Common myeloid progenitor, CD34-positive (primary cell): ENCODE measurements at regions of chr17 and their contacts with region 1.

Region 1: GRCh38 chr17:79045842-79046196 is 21.9 kb downstream of the C1QTNF1 start:
- DNase-seq: peak; percentile 59 to 73 (median 70)
- H3K4me3 ChIP-seq: no peak overlapping the region
- H3K27ac ChIP-seq: no peak overlapping the region
- H3K4me1 ChIP-seq: no peaks in the 10 kb centered on the region
- H3K27me3 ChIP-seq: peaks cover 0 to 2% (median 0%) of the 10 kb centered on the region in 5 experiments

Region 2: GRCh38 chr17:79019632-79020584 is 25.9 kb before region 1 on chr17:
- CTCF ChIA-PET with region 1: interaction called, 16 read pairs
- POLR2A ChIA-PET with region 1: interaction called, 8 read pairs
- DNase-seq: peak; percentile 69 to 78 (median 76)
- H3K4me3 ChIP-seq: no peak overlapping the region
- H3K27ac ChIP-seq: no peak overlapping the region
- H3K4me1 ChIP-seq: peaks cover 0 to 15% (median 12%) of the 10 kb centered on the region in 4 experiments
- H3K27me3 ChIP-seq: peaks cover 0 to 27% (median 23%) of the 10 kb centered on the region in 5 experiments

Region 3: DNA sequence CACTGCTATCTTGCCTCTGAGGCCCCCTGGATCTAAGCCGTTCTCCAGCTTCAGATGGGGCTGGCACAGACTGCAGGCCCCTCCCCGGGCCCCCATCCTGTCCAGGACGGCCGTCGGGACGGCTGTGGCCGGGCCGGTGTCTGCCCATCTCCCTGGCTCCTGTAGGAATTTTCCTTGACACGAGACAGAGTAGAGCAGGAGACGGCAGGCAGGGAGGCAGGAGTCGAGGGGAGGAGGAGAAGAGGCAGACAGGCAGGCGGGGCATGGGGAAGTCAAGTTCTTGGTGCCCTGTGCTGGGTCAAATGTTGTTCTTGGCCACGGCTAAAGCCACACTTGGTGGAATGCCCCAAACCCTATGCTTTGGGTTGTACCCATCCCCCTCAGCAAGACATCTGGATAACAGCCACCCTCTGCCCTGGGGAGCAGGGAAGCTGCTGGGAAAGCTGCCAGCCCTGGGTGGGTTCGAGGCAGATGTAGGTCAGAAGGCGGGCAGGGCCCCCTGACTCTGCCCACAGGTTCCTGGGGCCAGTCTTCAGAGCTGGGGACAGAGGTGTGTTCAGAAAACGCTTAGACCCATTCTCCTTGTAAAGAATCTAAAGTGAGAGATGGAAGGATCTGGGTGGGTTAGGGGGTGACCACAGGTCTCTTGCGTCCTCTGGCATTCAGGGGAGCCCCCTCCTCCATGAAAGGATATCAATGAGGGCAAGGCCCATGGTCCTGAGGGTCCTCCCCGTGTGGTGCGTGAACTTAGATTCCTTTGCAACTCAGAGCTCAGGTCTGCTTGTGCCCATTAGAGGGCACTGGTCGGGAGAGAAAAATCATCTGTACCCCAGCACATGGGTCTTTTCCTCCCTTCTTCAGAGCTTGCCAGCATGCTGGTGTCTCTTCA is 17.6 kb before region 1 on chr17:
- CTCF ChIA-PET with region 1: interaction called, 41 read pairs
- POLR2A ChIA-PET with region 1: no interaction called
- DNase-seq: peak in 2 of 3 donors; percentile 29 to 33
- H3K4me3 ChIP-seq: no peak overlapping the region
- H3K27ac ChIP-seq: no peak overlapping the region
- H3K4me1 ChIP-seq: peaks cover 0 to 19% (median 14%) of the 10 kb centered on the region in 4 experiments
- H3K27me3 ChIP-seq: peaks cover 0 to 58% (median 27%) of the 10 kb centered on the region in 5 experiments

Region 4: GRCh38 chr17:79057737-79058385 is 12.0 kb after region 1 on chr17:
- CTCF ChIA-PET with region 1: interaction called, 25 read pairs
- POLR2A ChIA-PET with region 1: no interaction called
- DNase-seq: peak in 2 of 3 donors; percentile 49 to 55
- H3K4me3 ChIP-seq: no peak overlapping the region
- H3K27ac ChIP-seq: no peak overlapping the region
- H3K4me1 ChIP-seq: peaks cover 0 to 20% (median 9%) of the 10 kb centered on the region in 4 experiments
- H3K27me3 ChIP-seq: peaks cover 0 to 2% (median 0%) of the 10 kb centered on the region in 5 experiments

Region 5: DNA sequence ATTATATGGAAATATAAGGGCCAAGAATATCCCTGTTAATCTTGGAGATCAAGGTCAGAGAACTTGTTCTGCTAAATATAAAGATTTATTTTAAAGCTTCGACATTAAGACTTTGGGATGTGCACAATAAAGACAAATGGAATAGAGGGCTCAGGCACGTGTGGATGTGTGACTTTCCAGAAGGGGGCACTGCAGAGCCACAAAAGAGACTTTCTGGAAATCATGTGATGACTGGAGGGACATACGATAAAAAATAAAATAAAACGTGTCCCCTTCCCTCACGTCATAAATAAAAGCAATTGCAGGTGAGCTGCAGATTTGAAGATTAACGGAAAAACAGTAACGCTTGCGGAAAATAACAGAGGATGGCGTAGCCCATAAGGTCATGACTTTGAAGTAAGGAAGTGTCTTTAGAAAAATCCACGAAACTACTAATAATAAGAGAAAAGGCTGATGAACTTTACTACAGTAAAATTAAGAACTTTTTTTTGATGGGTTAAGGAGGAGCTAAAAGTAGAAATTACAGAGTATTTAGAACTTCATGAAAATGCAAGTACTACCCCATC is 19.4 kb after region 1 on chr17:
- CTCF ChIA-PET with region 1: interaction called, 25 read pairs
- POLR2A ChIA-PET with region 1: no interaction called
- DNase-seq: peak; percentile 57 to 78 (median 71)
- H3K4me3 ChIP-seq: no peak overlapping the region
- H3K27ac ChIP-seq: no peak overlapping the region
- H3K4me1 ChIP-seq: peaks cover 0 to 1% (median 0%) of the 10 kb centered on the region in 4 experiments
- H3K27me3 ChIP-seq: no peaks in the 10 kb centered on the region

Region 6: DNA sequence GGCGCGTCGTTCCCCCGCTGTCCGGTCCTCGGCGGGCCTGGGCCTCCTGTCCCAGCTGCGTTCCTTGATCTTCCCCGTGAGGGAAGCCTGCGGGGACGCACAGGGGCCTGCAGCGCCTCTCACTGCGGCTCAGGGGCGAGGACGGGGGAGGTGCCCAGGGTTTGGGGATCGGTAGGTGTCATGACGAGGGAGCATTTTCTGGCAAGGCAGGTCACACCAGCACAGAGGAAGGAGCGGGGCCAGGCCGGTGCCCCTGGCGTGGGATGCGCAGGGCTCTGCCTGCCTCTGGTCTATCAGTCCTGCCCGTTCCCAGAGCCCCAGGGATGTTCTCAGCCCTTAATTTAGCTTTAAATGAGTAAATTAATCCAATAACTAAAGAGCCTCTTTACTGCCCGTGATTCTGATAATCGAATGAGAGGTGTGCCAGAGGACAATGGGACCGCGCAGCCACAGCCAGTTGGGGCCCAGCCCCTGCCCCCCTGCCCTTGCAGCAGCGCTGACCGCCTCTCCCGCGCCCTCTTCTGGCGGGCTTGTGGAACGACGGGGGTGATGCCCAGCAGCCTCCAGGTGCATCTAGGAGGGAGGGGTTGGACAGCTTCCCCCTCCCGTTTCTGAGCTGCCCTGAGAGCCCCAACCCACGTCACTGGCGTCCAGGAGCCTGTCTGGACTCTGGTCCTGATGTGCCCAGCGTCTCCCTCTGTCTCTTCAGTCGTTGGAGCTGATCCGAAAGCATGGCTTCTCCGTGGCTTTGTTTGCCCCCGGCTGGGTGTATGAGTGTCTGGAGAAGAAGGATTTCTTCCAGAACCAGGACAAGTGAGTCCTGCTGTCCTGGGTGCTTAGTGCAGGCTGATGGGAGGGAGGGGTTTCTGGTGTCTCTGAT is 36.7 kb after region 1 on chr17:
- CTCF ChIA-PET with region 1: interaction called, 39 read pairs
- POLR2A ChIA-PET with region 1: no interaction called
- DNase-seq: peak; percentile 26 to 45 (median 45)
- H3K4me3 ChIP-seq: no peak overlapping the region
- H3K27ac ChIP-seq: no peak overlapping the region
- H3K4me1 ChIP-seq: no peaks in the 10 kb centered on the region
- H3K27me3 ChIP-seq: no peaks in the 10 kb centered on the region

Region 7: GRCh38 chr17:79393358-79394202 is 347.8 kb after region 1 on chr17:
- CTCF ChIA-PET with region 1: interaction called, 10 read pairs
- POLR2A ChIA-PET with region 1: no interaction called
- DNase-seq: peak; percentile 44 to 73 (median 60)
- H3K4me3 ChIP-seq: no peak overlapping the region
- H3K27ac ChIP-seq: no peak overlapping the region
- H3K4me1 ChIP-seq: no peaks in the 10 kb centered on the region
- H3K27me3 ChIP-seq: peaks cover 0 to 88% (median 6%) of the 10 kb centered on the region in 5 experiments

Region 8: GRCh38 chr17:79741751-79742588 is 696.2 kb after region 1 on chr17:
- CTCF ChIA-PET with region 1: no interaction called
- POLR2A ChIA-PET with region 1: no interaction called
- DNase-seq: peak; percentile 57 to 67 (median 61)
- H3K4me3 ChIP-seq: peak overlapping the region in 5 of 7 experiments; percentile 19 to 73 (median 41)
- H3K27ac ChIP-seq: no peak overlapping the region
- H3K4me1 ChIP-seq: peaks cover 0 to 22% (median 16%) of the 10 kb centered on the region in 4 experiments
- H3K27me3 ChIP-seq: peaks cover 0 to 35% (median 20%) of the 10 kb centered on the region in 5 experiments